ENCODE measurements at regions of chr5 and their contacts with region 1.

Region 1: GRCh38 chr5:142611154-142611553 is 74.7 kb downstream of the FGF1 start:
- DNase-seq: peak; percentile 53 to 87 (median 75)
- H3K4me3 ChIP-seq: no peak overlapping the region
- H3K27ac ChIP-seq: peak overlapping the region in 16 of 59 donors; percentile 5 to 67 (median 39)
- H3K27me3 ChIP-seq: no peaks in the 10 kb centered on the region
- CTCF ChIP-seq: peak; percentile 65 to 92 (median 85)

Region 2: GRCh38 chr5:142655339-142656267 is 44.4 kb after region 1 on chr5:
- intact Hi-C with region 1: loop called (anchors 1 to 5 kb)
- DNase-seq: peak; percentile 83 to 94 (median 92)
- H3K4me3 ChIP-seq: peak overlapping the region in 8 of 59 donors; percentile 3 to 37 (median 10)
- H3K27ac ChIP-seq: peak overlapping the region; percentile 4 to 93 (median 83)
- H3K27me3 ChIP-seq: no peaks in the 10 kb centered on the region
- CTCF ChIP-seq: peak in 55 of 56 donors; percentile 81 to 100 (median 99)

Measured in dorsolateral prefrontal cortex (tissue), 120 donors.